MCF 10A (cell line): ENCODE measurements at regions of chr6 and their contacts with region 1.

Region 1: DNA sequence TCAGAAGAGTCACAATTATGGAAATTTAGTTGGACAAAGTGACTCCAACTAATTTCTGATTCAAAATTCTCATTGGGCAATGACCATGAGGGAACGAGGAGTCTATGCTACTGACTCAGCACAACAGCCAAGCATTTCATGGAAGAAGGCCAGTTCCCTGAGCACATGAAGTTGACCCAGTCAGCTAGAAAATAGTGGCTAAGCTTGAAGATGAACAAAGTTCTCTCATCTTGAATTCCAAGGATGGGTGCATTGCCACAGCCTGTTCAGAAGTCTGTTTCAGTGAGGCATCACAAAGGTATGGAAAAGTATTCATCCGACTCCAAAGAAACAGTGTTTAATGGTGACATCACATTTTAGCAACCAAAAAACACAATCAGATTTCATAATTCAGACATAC is 676.9 kb downstream of the HACE1 start:
- DNase-seq: peak; percentile 78
- H3K4me3 Mint-ChIP-seq: no peak overlapping the region
- H3K27ac Mint-ChIP-seq: peak overlapping the region; percentile 73
- H3K4me1 Mint-ChIP-seq: peaks cover 22% of the 10 kb centered on the region
- H3K27me3 Mint-ChIP-seq: no peaks in the 10 kb centered on the region
- CTCF ChIP-seq: no peak

Region 2: DNA sequence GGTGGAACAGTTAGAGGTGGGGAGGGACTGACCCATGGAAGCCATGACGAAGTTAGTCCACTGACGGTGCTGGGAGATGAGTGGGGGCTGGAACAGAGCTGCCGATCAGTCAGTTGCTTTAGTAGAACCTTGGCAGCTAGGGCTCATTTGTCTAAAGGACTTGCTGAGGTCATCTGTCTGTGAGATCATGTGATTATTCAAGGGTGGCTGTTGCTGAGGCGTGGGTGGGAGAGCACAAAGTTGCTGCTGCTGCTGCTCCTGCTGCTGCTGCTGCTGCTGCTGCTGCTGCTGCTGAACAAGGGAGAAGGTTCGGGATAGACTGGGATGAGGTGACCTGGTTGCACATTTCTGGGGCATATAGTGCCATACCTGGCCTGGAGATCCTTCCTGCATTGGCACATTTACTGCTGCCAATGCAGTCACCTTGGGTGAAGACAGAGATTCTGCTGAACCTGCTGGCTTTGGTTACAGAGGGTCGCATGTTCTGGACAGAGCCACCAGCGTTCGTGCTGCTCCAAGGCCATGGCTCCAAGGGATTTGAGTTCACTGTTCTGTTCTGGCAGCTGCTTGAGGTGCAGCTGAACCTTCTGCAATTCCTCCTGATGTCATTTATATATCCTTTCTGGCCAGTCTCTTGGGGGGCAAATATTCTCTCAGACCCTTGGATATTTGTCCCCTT is 163.6 kb before region 1 on chr6:
- CTCF ChIA-PET with region 1: no interaction called
- POLR2A ChIA-PET with region 1: no interaction called
- intact Hi-C with region 1: loop called (anchors 10 kb)
- DNase-seq: no peak
- H3K4me3 Mint-ChIP-seq: no peak overlapping the region
- H3K27ac Mint-ChIP-seq: no peak overlapping the region
- H3K4me1 Mint-ChIP-seq: no peaks in the 10 kb centered on the region
- H3K27me3 Mint-ChIP-seq: no peaks in the 10 kb centered on the region
- CTCF ChIP-seq: no peak

Region 3: GRCh38 chr6:104118274-104118673 is 64.5 kb before region 1 on chr6:
- CTCF ChIA-PET with region 1: no interaction called
- POLR2A ChIA-PET with region 1: no interaction called
- intact Hi-C with region 1: loop called (anchors 2 kb)
- DNase-seq: peak; percentile 45
- H3K4me3 Mint-ChIP-seq: no peak overlapping the region
- H3K27ac Mint-ChIP-seq: peak overlapping the region; percentile 64
- H3K4me1 Mint-ChIP-seq: peaks cover 11% of the 10 kb centered on the region
- H3K27me3 Mint-ChIP-seq: no peaks in the 10 kb centered on the region
- CTCF ChIP-seq: no peak

Region 4: DNA sequence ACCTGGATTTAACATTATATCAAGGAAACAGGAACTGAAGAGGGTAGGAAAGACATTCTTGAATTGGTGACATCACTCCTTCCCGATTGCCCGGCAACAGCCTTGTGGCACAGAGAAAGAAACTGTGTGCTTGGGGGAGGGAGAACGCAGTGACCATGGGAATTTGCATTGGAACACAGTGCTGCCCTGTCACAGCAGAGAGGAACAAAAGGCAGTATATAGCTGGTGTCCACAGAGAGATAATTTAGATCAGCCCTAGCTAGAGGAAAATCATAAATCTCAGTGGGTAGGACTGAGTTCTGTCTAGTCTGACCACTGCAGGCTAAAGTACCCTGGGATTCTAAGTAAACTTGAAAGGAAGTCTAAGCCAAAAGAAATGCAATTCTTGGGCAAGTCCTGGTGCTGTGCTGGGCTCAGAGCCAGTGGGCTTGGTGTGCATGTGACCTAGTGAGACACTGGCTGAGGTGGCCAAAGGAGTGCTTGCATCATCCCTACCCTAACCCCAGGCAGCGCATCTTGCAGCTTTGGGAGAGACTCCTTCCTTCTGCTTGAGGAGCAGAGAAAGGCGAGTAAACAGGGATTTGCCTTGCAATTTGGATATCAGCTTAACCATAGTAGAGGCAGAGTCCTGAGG is 20.7 kb before region 1 on chr6:
- CTCF ChIA-PET with region 1: no interaction called
- POLR2A ChIA-PET with region 1: interaction called, 6 read pairs
- intact Hi-C with region 1: loop called (anchors 1 kb)
- DNase-seq: peak; percentile 95
- H3K4me3 Mint-ChIP-seq: peak overlapping the region; percentile 40
- H3K27ac Mint-ChIP-seq: peak overlapping the region; percentile 91
- H3K4me1 Mint-ChIP-seq: peaks cover 19% of the 10 kb centered on the region
- H3K27me3 Mint-ChIP-seq: no peaks in the 10 kb centered on the region
- CTCF ChIP-seq: no peak

Region 5: GRCh38 chr6:104266922-104267321 is 84.1 kb after region 1 on chr6:
- CTCF ChIA-PET with region 1: no interaction called
- POLR2A ChIA-PET with region 1: no interaction called
- intact Hi-C with region 1: no loop called
- DNase-seq: no peak
- H3K4me3 Mint-ChIP-seq: no peak overlapping the region
- H3K27ac Mint-ChIP-seq: no peak overlapping the region
- H3K4me1 Mint-ChIP-seq: no peaks in the 10 kb centered on the region
- H3K27me3 Mint-ChIP-seq: no peaks in the 10 kb centered on the region
- CTCF ChIP-seq: no peak